Activated T-helper 2 cell treated with anti-CD3 and anti-CD28 coated beads, Interferon-gamma antibody, Interleukin-2, Interleukin-4, amounts not matched to agents 10 μg/mL and 5 μg/mL and 100 μg/mL, durations not matched to agents 14 hours and 24 hours and 36 hours (primary cell): ENCODE measurements at regions of chr6 and their contacts with region 1.

Region 1: GRCh38 chr6:116847227-116847626 is 18.3 kb upstream of the GPRC6A start:
- DNase-seq: no peak
- H3K4me3 Mint-ChIP-seq: no peak overlapping the region
- H3K27ac Mint-ChIP-seq: no peak overlapping the region
- H3K4me1 Mint-ChIP-seq: no peaks in the 10 kb centered on the region
- H3K27me3 Mint-ChIP-seq: peaks cover 2% of the 10 kb centered on the region

Region 2: GRCh38 chr6:116779573-116780164 is 67.6 kb before region 1 on chr6:
- intact Hi-C with region 1: loop called (anchors 1 kb)
- DNase-seq: no peak
- H3K4me3 Mint-ChIP-seq: no peak overlapping the region
- H3K27ac Mint-ChIP-seq: no peak overlapping the region
- H3K4me1 Mint-ChIP-seq: no peaks in the 10 kb centered on the region
- H3K27me3 Mint-ChIP-seq: peaks cover 5% of the 10 kb centered on the region